Activated B cell treated with CpG ODN at 0.5 μM for 24 hours (primary cell): ENCODE measurements at regions of chr3 and their contacts with region 1.

Region 1: GRCh38 chr3:138118612-138119422 is 3.4 kb upstream of the DZIP1L start:
- DNase-seq: peak; percentile 26
- ATAC-seq: peak; percentile 76
- H3K4me3 Mint-ChIP-seq: no peak overlapping the region
- H3K27ac Mint-ChIP-seq: no peak overlapping the region
- H3K4me1 Mint-ChIP-seq: peaks cover 9% of the 10 kb centered on the region
- H3K27me3 Mint-ChIP-seq: peaks cover 39% of the 10 kb centered on the region
- CTCF ChIP-seq: no peak

Region 2: GRCh38 chr3:137854533-137855280 is 264.1 kb before region 1 on chr3:
- CTCF ChIA-PET with region 1: no interaction called
- POLR2A ChIA-PET with region 1: no interaction called
- intact Hi-C with region 1: no loop called
- DNase-seq: no peak
- ATAC-seq: no peak
- H3K4me3 Mint-ChIP-seq: no peak overlapping the region
- H3K27ac Mint-ChIP-seq: no peak overlapping the region
- H3K4me1 Mint-ChIP-seq: no peaks in the 10 kb centered on the region
- H3K27me3 Mint-ChIP-seq: no peaks in the 10 kb centered on the region
- CTCF ChIP-seq: no peak

Region 3: GRCh38 chr3:138068579-138069174 is 50.1 kb before region 1 on chr3:
- CTCF ChIA-PET with region 1: interaction called, 12 read pairs
- POLR2A ChIA-PET with region 1: no interaction called
- intact Hi-C with region 1: loop called (anchors 1 kb)
- DNase-seq: peak; percentile 50
- ATAC-seq: peak; percentile 75
- H3K4me3 Mint-ChIP-seq: no peak overlapping the region
- H3K27ac Mint-ChIP-seq: no peak overlapping the region
- H3K4me1 Mint-ChIP-seq: no peaks in the 10 kb centered on the region
- H3K27me3 Mint-ChIP-seq: peaks cover 23% of the 10 kb centered on the region
- CTCF ChIP-seq: peak; percentile 27

Region 4: DNA sequence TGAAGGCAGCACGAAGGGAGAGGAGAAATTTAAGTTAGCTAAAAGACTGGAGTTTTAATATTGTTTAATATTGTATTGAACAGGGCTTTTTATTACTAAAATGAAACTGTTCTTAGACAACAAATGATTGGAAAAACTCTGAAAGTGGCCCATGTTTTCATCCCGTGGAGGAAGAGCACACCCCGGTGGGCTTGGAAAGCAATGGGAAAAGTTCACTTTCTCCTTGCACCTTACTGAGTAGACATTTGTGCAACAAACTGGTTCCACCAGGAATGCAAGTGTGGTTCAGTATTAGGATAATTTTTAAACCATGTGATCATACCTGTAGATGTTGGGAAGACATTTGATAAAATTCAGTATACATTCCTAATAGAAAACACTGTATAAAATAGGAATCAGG is 307.4 kb after region 1 on chr3:
- CTCF ChIA-PET with region 1: no interaction called
- POLR2A ChIA-PET with region 1: no interaction called
- intact Hi-C with region 1: no loop called
- DNase-seq: no peak
- ATAC-seq: no peak
- H3K4me3 Mint-ChIP-seq: no peak overlapping the region
- H3K27ac Mint-ChIP-seq: no peak overlapping the region
- H3K4me1 Mint-ChIP-seq: no peaks in the 10 kb centered on the region
- H3K27me3 Mint-ChIP-seq: peaks cover 8% of the 10 kb centered on the region
- CTCF ChIP-seq: no peak